ENCODE measurements at regions of chr17 and their contacts with region 1.

Region 1: DNA sequence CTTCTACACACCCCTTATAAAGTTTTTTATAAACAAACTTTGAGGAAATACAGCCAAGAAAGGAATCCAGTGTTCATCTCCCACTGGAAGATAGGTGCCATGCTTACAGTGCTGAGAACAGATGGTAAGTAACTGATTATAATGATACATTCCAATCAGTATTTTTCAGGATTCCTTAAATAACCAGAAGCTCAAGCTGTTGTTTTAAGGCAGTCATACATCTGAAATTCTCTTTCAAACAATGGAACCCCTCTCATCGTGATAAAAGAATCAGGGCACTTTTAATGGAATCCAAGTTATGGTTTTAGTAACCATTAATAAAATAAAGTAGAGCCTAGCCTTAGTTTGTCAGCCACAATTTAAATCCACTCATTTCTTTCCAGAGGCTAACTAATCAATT is 56.1 kb upstream of the STAC2 start:
- DNase-seq: no peak
- H3K4me3 ChIP-seq: no peak overlapping the region
- H3K27ac ChIP-seq: no peak overlapping the region
- H3K4me1 ChIP-seq: peaks cover 0 to 6% (median 0%) of the 10 kb centered on the region in 6 donors
- H3K27me3 ChIP-seq: no peaks in the 10 kb centered on the region
- CTCF ChIP-seq: no peak
- POLR2A ChIP-seq: no peak

Region 2: DNA sequence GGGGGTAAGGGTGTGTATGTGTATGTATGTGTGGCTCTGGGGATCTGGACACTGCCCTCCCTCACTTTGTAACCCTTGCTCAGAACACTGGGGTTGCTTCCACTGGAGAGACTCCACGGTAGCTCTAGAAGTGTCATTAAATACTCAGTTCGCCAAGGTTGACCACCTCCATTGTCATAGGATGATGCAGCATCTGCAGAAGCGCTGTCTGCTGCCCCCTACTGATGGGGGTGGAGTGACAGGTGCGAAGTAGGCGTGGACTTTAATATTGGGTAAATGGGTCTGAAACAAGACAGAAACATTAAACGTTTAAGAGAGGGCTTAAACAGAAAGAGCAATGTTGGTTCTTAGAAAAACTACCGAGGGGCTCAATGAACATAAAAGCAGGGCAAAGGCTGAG is 20.5 kb before region 1 on chr17:
- intact Hi-C with region 1: no loop called
- DNase-seq: no peak
- H3K4me3 ChIP-seq: no peak overlapping the region
- H3K27ac ChIP-seq: no peak overlapping the region
- H3K4me1 ChIP-seq: no peaks in the 10 kb centered on the region
- H3K27me3 ChIP-seq: no peaks in the 10 kb centered on the region
- CTCF ChIP-seq: peak in 4 of 11 experiments; percentile 13 to 25 (median 17)
- POLR2A ChIP-seq: no peak

Region 3: DNA sequence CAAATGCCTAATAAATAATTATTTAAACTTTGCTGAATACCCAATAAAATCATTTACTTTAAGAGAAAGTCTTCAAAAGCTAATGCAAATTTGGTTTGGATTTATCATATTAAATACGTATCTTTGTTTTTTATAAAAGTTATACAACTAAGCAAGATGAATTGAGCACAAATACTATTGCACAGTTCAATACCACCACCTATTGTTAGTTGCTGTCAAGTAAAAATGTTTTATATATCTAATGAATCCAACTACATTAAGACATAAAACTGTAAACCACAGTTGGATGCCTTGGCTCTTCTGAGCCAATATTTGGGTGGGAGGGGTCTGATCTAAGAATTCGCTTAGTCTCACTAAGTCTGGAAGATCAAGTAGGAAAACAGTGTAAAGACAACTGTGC is 111.9 kb after region 1 on chr17:
- intact Hi-C with region 1: loop called (anchors 10 kb)
- DNase-seq: no peak
- H3K4me3 ChIP-seq: no peak overlapping the region
- H3K27ac ChIP-seq: no peak overlapping the region
- H3K4me1 ChIP-seq: peaks cover 0 to 60% (median 6%) of the 10 kb centered on the region in 6 donors
- H3K27me3 ChIP-seq: no peaks in the 10 kb centered on the region
- CTCF ChIP-seq: peak in 1 of 11 experiments; percentile 5
- POLR2A ChIP-seq: no peak

Measured in spleen (tissue), 13 donors.